Mammary epithelial cell (primary cell): ENCODE measurements at regions of chr10 and their contacts with region 1.

Region 1: GRCh38 chr10:108130575-108130974 is 966.1 kb upstream of the SORCS1 start:
- DNase-seq: no peak
- H3K4me3 ChIP-seq: no peak overlapping the region
- H3K27ac ChIP-seq: no peak overlapping the region
- H3K4me1 ChIP-seq: no peaks in the 10 kb centered on the region
- H3K27me3 ChIP-seq: peaks cover 2% of the 10 kb centered on the region
- CTCF ChIP-seq: no peak

Region 2: GRCh38 chr10:108095932-108096925 is 34.3 kb before region 1 on chr10:
- CTCF ChIA-PET with region 1: no interaction called
- dilution Hi-C with region 1: no loop called
- in situ Hi-C with region 1: no loop called
- intact Hi-C with region 1: loop called (anchors 1 kb)
- DNase-seq: no peak
- H3K4me3 ChIP-seq: no peak overlapping the region
- H3K27ac ChIP-seq: no peak overlapping the region
- H3K4me1 ChIP-seq: no peaks in the 10 kb centered on the region
- H3K27me3 ChIP-seq: no peaks in the 10 kb centered on the region
- CTCF ChIP-seq: peak in 1 of 2 donors; percentile 15

Region 3: DNA sequence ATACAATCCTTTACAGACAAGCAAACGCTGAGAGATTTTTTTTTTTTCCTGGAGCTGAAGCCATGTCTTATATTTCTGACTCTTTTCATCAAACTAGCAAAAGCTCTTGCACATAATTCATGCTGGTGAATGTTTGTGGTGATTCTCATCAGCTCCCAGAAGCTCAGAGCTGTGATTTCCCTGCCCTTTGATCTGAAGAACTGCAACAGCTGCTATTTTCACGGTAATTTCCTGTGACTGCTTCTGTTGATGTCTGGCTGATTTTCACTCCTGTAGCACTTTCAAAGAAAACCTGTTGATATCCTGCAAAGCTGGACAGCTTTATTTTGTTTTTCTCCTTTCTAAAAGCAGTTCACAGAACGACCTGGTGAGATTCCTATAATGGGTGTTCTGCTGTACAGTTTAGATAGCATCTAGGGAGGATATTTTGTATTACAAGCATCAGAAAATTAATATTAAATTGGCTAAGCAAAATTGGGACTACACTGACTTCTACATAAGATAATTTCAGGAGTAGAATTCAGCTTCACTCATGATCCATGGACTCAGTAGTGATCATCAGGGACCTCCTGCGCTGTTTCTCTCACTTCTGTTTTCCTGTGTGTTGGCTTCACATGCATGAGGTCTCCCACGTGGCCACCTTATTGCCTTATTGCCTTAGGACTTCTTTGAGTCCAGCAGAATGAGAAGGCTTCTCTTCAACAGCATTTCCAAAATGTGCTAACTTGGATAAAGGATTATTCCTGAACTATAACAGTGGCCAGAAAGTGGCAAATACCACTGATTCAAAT is 145.5 kb after region 1 on chr10:
- CTCF ChIA-PET with region 1: no interaction called
- dilution Hi-C with region 1: no loop called
- in situ Hi-C with region 1: no loop called
- intact Hi-C with region 1: no loop called
- DNase-seq: no peak
- H3K4me3 ChIP-seq: no peak overlapping the region
- H3K27ac ChIP-seq: no peak overlapping the region
- H3K4me1 ChIP-seq: no peaks in the 10 kb centered on the region
- H3K27me3 ChIP-seq: no peaks in the 10 kb centered on the region
- CTCF ChIP-seq: no peak